Activated naive CD4-positive, alpha-beta T cell treated with anti-CD3 and anti-CD28 coated beads for 36 hours (primary cell): ENCODE measurements at regions of chr9 and their contacts with region 1.

Region 1: GRCh38 chr9:29906065-29906464 is 2332.8 kb upstream of the C9orf72 start:
- DNase-seq: no peak
- H3K4me3 Mint-ChIP-seq: no peak overlapping the region
- H3K27ac Mint-ChIP-seq: no peak overlapping the region
- H3K4me1 Mint-ChIP-seq: no peaks in the 10 kb centered on the region
- H3K27me3 Mint-ChIP-seq: no peaks in the 10 kb centered on the region

Region 2: GRCh38 chr9:29928072-29928471 is 22.0 kb after region 1 on chr9:
- CTCF ChIA-PET with region 1: no interaction called
- intact Hi-C with region 1: loop called (anchors 1 kb)
- DNase-seq: no peak
- H3K4me3 Mint-ChIP-seq: no peak overlapping the region
- H3K27ac Mint-ChIP-seq: no peak overlapping the region
- H3K4me1 Mint-ChIP-seq: no peaks in the 10 kb centered on the region
- H3K27me3 Mint-ChIP-seq: no peaks in the 10 kb centered on the region

Region 3: GRCh38 chr9:30058463-30058862 is 152.4 kb after region 1 on chr9:
- CTCF ChIA-PET with region 1: no interaction called
- intact Hi-C with region 1: no loop called
- DNase-seq: no peak
- H3K4me3 Mint-ChIP-seq: no peak overlapping the region
- H3K27ac Mint-ChIP-seq: no peak overlapping the region
- H3K4me1 Mint-ChIP-seq: no peaks in the 10 kb centered on the region
- H3K27me3 Mint-ChIP-seq: no peaks in the 10 kb centered on the region